ENCODE measurements at regions of chr14 and their contacts with region 1.

Region 1: GRCh38 chr14:54498095-54498531 is 9.3 kb upstream of the GMFB start:
- DNase-seq: peak; percentile 78
- ATAC-seq: peak; percentile 78
- H3K4me3 ChIP-seq: peak overlapping the region; percentile 51 to 71 (median 69)
- H3K27ac ChIP-seq: peak overlapping the region; percentile 77
- H3K4me1 ChIP-seq: peaks cover 75% of the 10 kb centered on the region
- H3K27me3 ChIP-seq: no peaks in the 10 kb centered on the region
- CTCF ChIP-seq: no peak
- EP300 ChIP-seq: peak in 1 of 2 experiments; percentile 71; a peak in 2 of 4 replicates
- POLR2A ChIP-seq: 0 out of 4 replicates have a peak, but pooled peaks of 1 of the 2 experiments have one; percentile 19
- RAD21 ChIP-seq: no peak

Region 2: DNA sequence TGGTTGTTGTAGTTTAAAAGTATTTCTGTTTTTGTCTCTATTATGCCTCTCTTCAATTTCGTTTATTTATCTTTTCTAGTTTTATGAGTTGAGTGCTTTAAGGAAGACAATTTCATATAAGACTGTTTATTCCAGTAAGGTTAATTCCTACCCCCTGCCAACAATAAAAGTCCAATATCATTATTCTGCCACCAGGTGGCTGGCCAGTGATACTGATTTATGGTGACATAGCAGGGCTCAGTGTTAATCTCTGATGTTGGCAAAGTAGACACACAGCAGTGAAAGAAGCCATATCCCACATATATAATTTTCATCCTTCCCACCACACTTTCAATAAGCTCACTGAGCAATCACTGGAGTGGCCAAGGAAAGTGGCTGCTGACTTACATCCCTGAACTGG is 472.5 kb before region 1 on chr14:
- CTCF ChIA-PET with region 1: no interaction called
- POLR2A ChIA-PET with region 1: no interaction called
- in situ Hi-C with region 1: no loop called
- intact Hi-C with region 1: no loop called
- DNase-seq: peak; percentile 36
- ATAC-seq: peak; percentile 52; the same call in 1 of the 3 replicates
- H3K4me3 ChIP-seq: no peak overlapping the region
- H3K27ac ChIP-seq: no peak overlapping the region
- H3K4me1 ChIP-seq: peaks cover 13% of the 10 kb centered on the region
- H3K27me3 ChIP-seq: no peaks in the 10 kb centered on the region
- CTCF ChIP-seq: peak; percentile 56
- EP300 ChIP-seq: no peak
- POLR2A ChIP-seq: no peak
- RAD21 ChIP-seq: 0 out of 2 replicates have a peak, but pooled peaks have one; percentile 29

Region 3: GRCh38 chr14:54211551-54212308 is 286.4 kb before region 1 on chr14:
- CTCF ChIA-PET with region 1: no interaction called
- POLR2A ChIA-PET with region 1: no interaction called
- in situ Hi-C with region 1: no loop called
- intact Hi-C with region 1: no loop called
- DNase-seq: no peak
- ATAC-seq: no peak
- H3K4me3 ChIP-seq: no peak overlapping the region
- H3K27ac ChIP-seq: no peak overlapping the region
- H3K4me1 ChIP-seq: peaks cover 30% of the 10 kb centered on the region
- H3K27me3 ChIP-seq: no peaks in the 10 kb centered on the region
- CTCF ChIP-seq: no peak
- EP300 ChIP-seq: no peak
- POLR2A ChIP-seq: no peak
- RAD21 ChIP-seq: no peak

Region 4: DNA sequence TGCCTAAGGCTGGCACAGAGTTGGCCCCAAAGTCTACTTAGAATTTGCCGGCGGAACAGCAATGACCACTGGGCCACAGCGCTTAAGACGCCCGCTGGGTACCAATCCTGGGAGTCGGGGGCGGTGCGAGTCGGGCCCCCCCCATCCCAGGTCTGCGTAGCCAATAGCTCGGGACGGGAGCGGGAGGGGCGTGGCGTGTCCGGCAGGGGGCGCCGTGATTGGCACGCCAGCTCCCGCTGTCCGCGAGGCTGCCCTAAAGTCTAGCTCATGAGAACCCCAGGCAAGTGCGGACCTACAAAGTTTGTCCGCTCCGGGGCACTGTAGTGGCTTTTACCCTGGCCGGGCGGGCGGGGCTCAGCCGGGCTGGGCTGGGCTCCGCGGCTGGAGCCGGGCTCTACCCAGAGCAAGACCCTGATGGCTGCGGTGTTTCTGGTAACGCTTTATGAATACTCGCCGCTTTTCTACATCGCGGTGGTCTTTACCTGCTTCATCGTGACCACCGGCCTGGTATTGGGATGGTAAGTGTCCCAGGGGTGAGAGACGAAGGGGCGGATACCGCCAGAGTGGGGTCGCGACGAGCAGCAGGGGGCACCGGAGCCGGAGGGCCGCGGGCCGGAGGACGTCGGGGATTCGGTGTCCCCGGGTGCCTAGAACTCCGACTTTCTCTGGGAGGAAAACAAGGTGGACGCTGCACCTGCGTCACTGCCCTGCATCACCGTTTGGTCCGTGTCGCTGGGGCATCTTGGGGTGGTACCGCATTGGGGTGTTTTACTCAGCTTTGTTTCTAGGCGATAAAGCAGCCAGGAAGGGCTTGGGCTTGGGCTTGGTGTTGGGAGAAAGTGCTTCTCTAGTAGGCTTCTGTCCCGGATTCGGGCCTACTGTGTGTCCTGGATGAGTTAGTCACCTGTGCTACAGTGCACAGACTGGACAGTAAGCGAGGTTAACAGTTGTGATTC is 11.7 kb after region 1 on chr14 and contains the start of gene CGRRF1:
- CTCF ChIA-PET with region 1: no interaction called
- POLR2A ChIA-PET with region 1: interaction called, 10 read pairs
- in situ Hi-C with region 1: no loop called
- intact Hi-C with region 1: no loop called
- DNase-seq: peak; percentile 94
- ATAC-seq: peak; percentile 98
- H3K4me3 ChIP-seq: peak within 1 kb of the TSS; percentile 79 to 97 (median 90)
- H3K27ac ChIP-seq: peak within 1 kb of the TSS; percentile 57
- H3K4me1 ChIP-seq: peaks cover 48% of the 10 kb centered on the region
- H3K27me3 ChIP-seq: peaks cover 0 to 4% of the 10 kb centered on the region in 2 experiments; a peak in 1 of 5 replicates
- CTCF ChIP-seq: peak; percentile 89
- EP300 ChIP-seq: 0 out of 4 replicates have a peak, but pooled peaks of 1 of the 2 experiments have one; percentile 15
- POLR2A ChIP-seq: peak; percentile 55 to 76; a peak in 3 of 4 replicates
- RAD21 ChIP-seq: peak; percentile 66
- total RNA-seq, gene CGRRF1: 13.3 and 18.2 TPM in 2 replicates

Region 5: DNA sequence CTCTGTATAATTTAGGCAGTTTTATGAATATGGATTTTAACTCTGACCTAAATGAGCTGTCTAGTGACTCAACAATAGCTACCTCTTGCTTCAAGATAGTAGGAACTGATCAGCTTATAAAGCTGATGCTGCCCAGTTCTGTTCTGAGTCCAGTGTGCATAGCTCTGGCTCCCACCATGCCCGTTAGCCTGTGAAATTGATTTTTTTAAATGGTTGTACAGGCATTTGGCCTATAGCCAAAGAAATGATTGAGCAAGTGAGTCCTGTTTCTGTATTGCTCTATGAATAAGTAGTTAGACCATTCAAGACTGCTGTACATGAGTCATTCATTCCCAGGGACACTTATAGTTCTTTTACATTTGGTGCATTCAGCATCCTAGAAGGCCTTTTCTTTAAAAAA is 105.2 kb after region 1 on chr14:
- CTCF ChIA-PET with region 1: no interaction called
- POLR2A ChIA-PET with region 1: no interaction called
- in situ Hi-C with region 1: no loop called
- intact Hi-C with region 1: no loop called
- DNase-seq: no peak
- ATAC-seq: no peak
- H3K4me3 ChIP-seq: no peak overlapping the region
- H3K27ac ChIP-seq: no peak overlapping the region
- H3K4me1 ChIP-seq: peaks cover 35% of the 10 kb centered on the region
- H3K27me3 ChIP-seq: no peaks in the 10 kb centered on the region
- CTCF ChIP-seq: no peak
- EP300 ChIP-seq: no peak
- POLR2A ChIP-seq: no peak
- RAD21 ChIP-seq: no peak

Region 6: DNA sequence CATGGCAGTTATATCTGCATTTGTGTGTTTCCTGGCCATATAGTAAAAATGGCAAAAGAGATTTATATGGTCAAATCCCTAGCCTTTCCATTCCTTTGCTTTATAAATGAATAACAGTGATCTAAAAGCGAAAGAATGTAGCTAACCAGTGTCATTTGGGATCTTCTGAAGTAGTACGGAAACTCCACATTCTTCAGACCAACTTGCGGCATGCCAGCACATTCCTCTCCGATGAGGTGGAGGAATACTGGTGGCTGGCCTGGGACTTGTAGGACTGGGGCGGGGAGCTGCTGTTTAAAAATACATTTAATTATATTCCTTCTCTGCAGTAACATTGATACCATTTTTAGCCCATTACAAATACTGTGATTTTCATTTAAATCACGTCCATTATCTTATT is 154.1 kb after region 1 on chr14:
- CTCF ChIA-PET with region 1: no interaction called
- POLR2A ChIA-PET with region 1: no interaction called
- in situ Hi-C with region 1: no loop called
- intact Hi-C with region 1: no loop called
- DNase-seq: peak; percentile 91
- ATAC-seq: peak; percentile 85
- H3K4me3 ChIP-seq: peak overlapping the region in 1 of 3 experiments; percentile 6; a peak in 1 of 6 replicates
- H3K27ac ChIP-seq: peak overlapping the region; percentile 82
- H3K4me1 ChIP-seq: peaks cover 99% of the 10 kb centered on the region
- H3K27me3 ChIP-seq: no peaks in the 10 kb centered on the region
- CTCF ChIP-seq: no peak
- EP300 ChIP-seq: peak in 1 of 2 experiments; percentile 76; a peak in 2 of 4 replicates
- POLR2A ChIP-seq: no peak
- RAD21 ChIP-seq: no peak

Region 7: GRCh38 chr14:54805521-54806322 is 307.6 kb after region 1 on chr14:
- CTCF ChIA-PET with region 1: no interaction called
- POLR2A ChIA-PET with region 1: no interaction called
- in situ Hi-C with region 1: no loop called
- intact Hi-C with region 1: loop called (anchors 5 kb)
- DNase-seq: peak; percentile 62
- ATAC-seq: peak; percentile 81
- H3K4me3 ChIP-seq: peak overlapping the region in 1 of 3 experiments; percentile 55; a peak in 3 of 6 replicates
- H3K27ac ChIP-seq: no peak overlapping the region
- H3K4me1 ChIP-seq: peaks cover 55% of the 10 kb centered on the region
- H3K27me3 ChIP-seq: no peaks in the 10 kb centered on the region
- CTCF ChIP-seq: peak; percentile 93
- EP300 ChIP-seq: no peak
- POLR2A ChIP-seq: no peak
- RAD21 ChIP-seq: peak; percentile 72

Measured in HepG2 (cell line).